ENCODE measurements at regions of chr3 and their contacts with region 1.

Region 1: DNA sequence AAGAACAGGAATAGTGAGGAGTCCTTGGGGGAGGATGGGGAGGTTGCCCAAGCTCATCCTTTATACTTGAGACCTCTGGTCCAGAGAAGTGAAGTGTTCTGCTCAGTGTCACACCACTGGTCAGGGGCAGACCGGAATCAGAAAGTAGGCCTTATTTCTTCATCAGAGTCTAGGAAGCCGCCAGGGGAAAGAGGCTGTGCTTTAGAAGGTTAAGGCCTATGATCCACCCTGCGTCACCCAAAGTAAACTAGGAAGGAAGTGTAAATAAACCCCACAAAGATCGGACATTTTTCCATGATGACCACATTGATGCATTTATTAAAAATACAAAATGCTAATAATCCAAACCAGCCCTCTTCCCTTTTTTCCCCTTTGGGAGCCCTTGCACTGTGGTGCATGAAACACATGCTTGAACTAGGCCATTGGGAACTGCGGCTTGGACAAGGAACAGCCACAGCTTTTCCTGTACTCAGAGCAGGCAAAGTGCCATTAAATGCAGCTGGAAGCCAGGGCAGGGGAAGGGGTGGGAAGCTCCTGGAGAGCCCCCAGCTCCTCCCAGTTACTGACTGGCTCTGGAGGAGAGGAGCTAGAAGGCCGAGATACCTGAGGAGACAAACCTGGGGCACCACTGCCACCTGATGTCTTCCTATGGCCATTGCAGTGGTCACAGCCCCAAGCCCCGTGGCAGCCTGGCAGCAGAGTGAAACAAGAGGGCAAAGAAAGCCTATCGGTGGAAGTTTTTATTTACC is 37.0 kb downstream of the CDC25A start:
- DNase-seq: peak; percentile 30
- ATAC-seq: peak; percentile 89
- H3K4me3 Mint-ChIP-seq: no peak overlapping the region
- H3K27ac Mint-ChIP-seq: no peak overlapping the region
- H3K4me1 Mint-ChIP-seq: no peaks in the 10 kb centered on the region
- H3K27me3 Mint-ChIP-seq: no peaks in the 10 kb centered on the region
- CTCF ChIP-seq: no peak

Region 2: GRCh38 chr3:47522082-47522987 is 628.9 kb before region 1 on chr3:
- CTCF ChIA-PET with region 1: interaction called, 3 read pairs
- POLR2A ChIA-PET with region 1: no interaction called
- intact Hi-C with region 1: loop called (anchors 1 kb)
- DNase-seq: peak; percentile 55
- ATAC-seq: peak; percentile 95
- H3K4me3 Mint-ChIP-seq: no peak overlapping the region
- H3K27ac Mint-ChIP-seq: no peak overlapping the region
- H3K4me1 Mint-ChIP-seq: peaks cover 8% of the 10 kb centered on the region
- H3K27me3 Mint-ChIP-seq: no peaks in the 10 kb centered on the region
- CTCF ChIP-seq: peak; percentile 20

Region 3: DNA sequence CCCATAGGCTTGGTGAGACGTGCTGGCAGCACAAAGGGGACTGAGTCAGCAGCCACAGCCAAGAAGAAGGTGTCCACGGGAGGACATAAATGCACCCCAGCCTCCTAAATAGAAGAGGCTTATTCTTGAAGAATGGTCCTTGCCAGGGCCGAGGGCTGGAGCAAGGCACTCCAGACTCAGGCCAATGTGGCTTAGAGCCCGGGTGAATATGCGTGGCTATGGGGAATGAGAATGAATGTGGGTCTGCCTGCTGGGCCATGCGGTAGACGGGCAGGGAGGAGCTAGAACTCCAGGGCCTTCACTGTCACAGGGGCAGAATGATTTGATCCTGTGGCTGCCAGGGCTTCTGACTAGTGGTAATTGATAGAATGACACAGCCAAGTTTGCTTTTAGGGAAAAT is 314.2 kb before region 1 on chr3:
- CTCF ChIA-PET with region 1: interaction called, 17 read pairs
- POLR2A ChIA-PET with region 1: no interaction called
- intact Hi-C with region 1: loop called (anchors 1 kb)
- DNase-seq: no peak
- ATAC-seq: no peak
- H3K4me3 Mint-ChIP-seq: no peak overlapping the region
- H3K27ac Mint-ChIP-seq: no peak overlapping the region
- H3K4me1 Mint-ChIP-seq: peaks cover 3% of the 10 kb centered on the region
- H3K27me3 Mint-ChIP-seq: no peaks in the 10 kb centered on the region
- CTCF ChIP-seq: no peak

Region 4: DNA sequence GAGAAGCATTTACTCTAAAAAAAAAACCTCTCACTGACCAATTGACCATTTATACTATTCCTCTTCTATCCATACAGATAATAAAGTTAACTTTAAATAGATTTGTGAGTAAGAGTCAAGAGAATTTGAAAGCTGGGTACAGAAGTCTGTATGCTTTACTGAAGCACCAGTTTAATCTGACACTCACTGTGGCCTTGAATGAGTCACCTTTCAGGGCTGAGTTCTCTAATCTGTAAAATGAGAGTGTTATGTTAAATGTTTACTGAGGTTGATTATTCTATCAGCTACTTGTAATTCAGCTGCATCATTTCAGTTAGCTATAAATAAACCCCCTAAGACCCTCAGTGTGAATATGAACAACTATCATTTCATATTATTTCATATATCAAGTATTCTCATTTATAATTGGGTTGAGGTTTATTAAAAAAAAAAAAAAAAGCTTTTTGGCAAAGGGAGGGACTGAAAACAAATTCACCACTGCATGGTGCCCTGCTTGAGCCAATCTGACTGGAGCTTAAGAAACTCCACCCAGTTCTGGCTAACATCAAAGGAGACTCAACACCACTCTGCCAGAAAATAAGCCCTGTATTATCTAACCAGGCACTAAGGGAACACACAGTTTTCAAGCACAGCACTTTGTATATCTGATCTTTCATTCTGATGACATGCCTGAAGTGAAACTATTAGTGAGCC is 137.8 kb before region 1 on chr3:
- CTCF ChIA-PET with region 1: no interaction called
- POLR2A ChIA-PET with region 1: no interaction called
- intact Hi-C with region 1: no loop called
- DNase-seq: no peak
- ATAC-seq: no peak
- H3K4me3 Mint-ChIP-seq: no peak overlapping the region
- H3K27ac Mint-ChIP-seq: no peak overlapping the region
- H3K4me1 Mint-ChIP-seq: peaks cover 24% of the 10 kb centered on the region
- H3K27me3 Mint-ChIP-seq: no peaks in the 10 kb centered on the region
- CTCF ChIP-seq: no peak